ENCODE measurements at regions of chr1 and their contacts with region 1.

Region 1: DNA sequence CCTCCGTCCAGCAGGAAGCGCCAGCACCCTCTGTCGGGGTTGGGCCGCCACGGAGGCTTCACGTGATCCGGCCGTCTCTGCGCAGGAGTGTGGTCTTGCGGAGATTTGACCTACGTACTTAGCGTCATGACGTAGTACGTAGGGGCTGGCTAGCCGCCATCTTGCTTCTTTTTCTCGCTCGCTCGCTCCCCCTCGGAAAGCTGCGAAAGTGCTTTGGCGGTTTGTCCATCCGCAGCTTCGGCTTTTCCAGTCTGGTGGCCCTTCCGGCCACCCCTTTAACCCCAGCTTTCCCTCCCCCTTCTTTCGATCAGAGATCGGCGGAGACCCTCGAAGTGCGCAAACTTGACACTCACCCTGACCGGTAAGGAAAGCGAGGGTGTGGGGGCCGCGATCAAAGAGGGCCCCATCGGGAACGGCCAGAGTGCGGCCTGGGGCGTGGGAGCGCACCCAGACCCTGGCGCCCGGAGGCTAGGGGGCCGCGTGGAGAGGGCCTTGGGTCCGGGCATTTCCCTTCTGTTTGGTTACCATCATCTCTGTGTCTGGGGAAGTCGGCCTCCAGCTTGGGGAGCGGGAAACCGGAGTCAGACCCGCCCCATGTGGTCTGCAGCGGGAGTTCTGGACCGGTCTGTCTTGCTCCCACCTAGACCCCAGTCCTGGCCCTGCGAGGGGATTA is at the start of gene PRRC2C:
- DNase-seq: peak; percentile 92
- H3K4me3 Mint-ChIP-seq: peak within 1 kb of the TSS; percentile 93
- H3K27ac Mint-ChIP-seq: peak within 1 kb of the TSS; percentile 91
- H3K4me1 Mint-ChIP-seq: peaks cover 40% of the 10 kb centered on the region
- H3K27me3 Mint-ChIP-seq: no peaks in the 10 kb centered on the region
- total RNA-seq, gene PRRC2C: 269 and 286 TPM in 2 replicates

Region 2: GRCh38 chr1:171313835-171314320 is 171.6 kb before region 1 on chr1 and contains the start of gene FMO4:
- intact Hi-C with region 1: loop called (anchors 5 kb)
- DNase-seq: peak; percentile 78
- H3K4me3 Mint-ChIP-seq: peak within 1 kb of the TSS; percentile 76
- H3K27ac Mint-ChIP-seq: peak within 1 kb of the TSS; percentile 64
- H3K4me1 Mint-ChIP-seq: peaks cover 9% of the 10 kb centered on the region
- H3K27me3 Mint-ChIP-seq: no peaks in the 10 kb centered on the region
- total RNA-seq, gene FMO4: 1.5 and 1.8 TPM in 2 replicates

Region 3: GRCh38 chr1:171501305-171502024 is 16.0 kb after region 1 on chr1:
- intact Hi-C with region 1: loop called (anchors 2 kb)
- DNase-seq: no peak
- H3K4me3 Mint-ChIP-seq: no peak overlapping the region
- H3K27ac Mint-ChIP-seq: peak overlapping the region; percentile 17
- H3K4me1 Mint-ChIP-seq: peaks cover 62% of the 10 kb centered on the region
- H3K27me3 Mint-ChIP-seq: no peaks in the 10 kb centered on the region

Region 4: GRCh38 chr1:171741872-171742576 is 256.5 kb after region 1 on chr1 and contains the start of gene VAMP4:
- intact Hi-C with region 1: loop called (anchors 1 kb)
- DNase-seq: peak; percentile 81
- H3K4me3 Mint-ChIP-seq: peak within 1 kb of the TSS; percentile 97
- H3K27ac Mint-ChIP-seq: peak within 1 kb of the TSS; percentile 99
- H3K4me1 Mint-ChIP-seq: peaks cover 47% of the 10 kb centered on the region
- H3K27me3 Mint-ChIP-seq: no peaks in the 10 kb centered on the region
- total RNA-seq, gene VAMP4: 10.2 and 11.8 TPM in 2 replicates

Region 5: DNA sequence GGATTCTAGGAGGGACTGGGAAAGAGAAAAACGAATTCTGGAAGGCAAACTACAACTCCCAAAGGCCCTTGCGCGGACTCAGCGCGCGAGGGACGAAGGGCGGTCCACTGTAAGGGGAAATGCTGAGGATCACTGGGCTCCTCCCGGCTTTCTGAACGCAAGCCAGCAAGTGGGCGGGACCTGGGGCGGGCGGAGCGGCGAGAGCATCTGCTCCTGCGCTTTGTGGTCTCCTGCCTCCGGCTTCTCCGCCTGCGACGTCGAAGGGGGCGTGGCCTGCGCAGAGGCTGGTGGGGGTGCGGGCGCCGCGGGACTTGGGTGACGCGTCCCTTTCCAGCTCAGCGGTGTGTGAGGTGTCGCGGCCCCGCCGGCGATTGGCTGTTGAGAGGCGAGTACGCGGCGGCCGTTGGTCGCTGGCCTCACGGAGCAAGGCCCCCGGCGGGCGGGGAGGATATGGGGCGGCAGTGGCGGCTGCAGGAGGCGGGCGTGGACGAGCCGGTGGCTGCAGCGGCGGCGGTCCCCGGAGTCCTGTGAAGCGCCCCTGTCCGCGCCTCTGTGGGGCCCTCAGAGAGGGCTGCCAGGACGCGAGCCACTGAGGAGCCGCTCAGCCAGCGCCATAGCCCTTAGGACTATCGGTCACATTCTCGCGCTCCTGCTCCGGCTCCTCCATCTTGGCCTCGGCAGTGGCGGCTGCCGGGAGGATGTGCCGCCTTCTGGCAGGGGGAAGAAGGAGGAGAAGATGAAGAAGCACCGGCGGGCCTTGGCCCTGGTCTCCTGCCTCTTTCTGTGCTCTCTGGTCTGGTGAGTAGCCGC is 1047.4 kb after region 1 on chr1 and contains the start of gene SUCO:
- intact Hi-C with region 1: loop called (anchors 5 kb)
- DNase-seq: peak; percentile 100
- H3K4me3 Mint-ChIP-seq: peak within 1 kb of the TSS; percentile 95
- H3K27ac Mint-ChIP-seq: peak within 1 kb of the TSS; percentile 99
- H3K4me1 Mint-ChIP-seq: peaks cover 38% of the 10 kb centered on the region
- H3K27me3 Mint-ChIP-seq: peaks cover 9% of the 10 kb centered on the region
- total RNA-seq, gene SUCO: 28.2 and 33.3 TPM in 2 replicates